ENCODE measurements at regions of chr5 and their contacts with region 1.

Region 1: DNA sequence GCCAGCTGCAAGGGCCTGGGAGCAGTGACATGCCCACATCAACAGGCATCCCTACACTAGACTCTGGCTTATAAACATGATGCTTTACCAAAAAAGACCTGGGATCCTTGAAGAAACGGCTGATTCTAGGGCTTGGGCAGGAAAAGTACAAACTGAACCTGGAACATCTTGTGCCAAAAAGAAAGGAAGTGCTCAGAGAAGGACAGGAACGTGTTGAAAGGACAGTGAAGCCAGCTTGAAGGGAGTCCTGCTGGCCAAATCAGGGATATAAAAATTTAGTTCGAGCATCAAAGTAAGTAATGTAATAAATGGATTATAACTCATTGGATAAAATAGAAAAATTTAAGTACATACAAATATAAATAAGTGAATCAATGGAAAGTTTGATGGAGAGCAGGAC is 58.1 kb downstream of the ALDH7A1 start:
- DNase-seq: no peak
- H3K4me3 ChIP-seq: no peak overlapping the region
- H3K27ac ChIP-seq: peak overlapping the region in 2 of 4 donors; percentile 3 to 26
- H3K4me1 ChIP-seq: peaks cover 4 to 34% (median 27%) of the 10 kb centered on the region in 4 donors
- H3K27me3 ChIP-seq: no peaks in the 10 kb centered on the region
- CTCF ChIP-seq: peak in 1 of 3 experiments; percentile 28
- EP300 ChIP-seq: peak; percentile 31
- POLR2A ChIP-seq: no peak

Region 2: DNA sequence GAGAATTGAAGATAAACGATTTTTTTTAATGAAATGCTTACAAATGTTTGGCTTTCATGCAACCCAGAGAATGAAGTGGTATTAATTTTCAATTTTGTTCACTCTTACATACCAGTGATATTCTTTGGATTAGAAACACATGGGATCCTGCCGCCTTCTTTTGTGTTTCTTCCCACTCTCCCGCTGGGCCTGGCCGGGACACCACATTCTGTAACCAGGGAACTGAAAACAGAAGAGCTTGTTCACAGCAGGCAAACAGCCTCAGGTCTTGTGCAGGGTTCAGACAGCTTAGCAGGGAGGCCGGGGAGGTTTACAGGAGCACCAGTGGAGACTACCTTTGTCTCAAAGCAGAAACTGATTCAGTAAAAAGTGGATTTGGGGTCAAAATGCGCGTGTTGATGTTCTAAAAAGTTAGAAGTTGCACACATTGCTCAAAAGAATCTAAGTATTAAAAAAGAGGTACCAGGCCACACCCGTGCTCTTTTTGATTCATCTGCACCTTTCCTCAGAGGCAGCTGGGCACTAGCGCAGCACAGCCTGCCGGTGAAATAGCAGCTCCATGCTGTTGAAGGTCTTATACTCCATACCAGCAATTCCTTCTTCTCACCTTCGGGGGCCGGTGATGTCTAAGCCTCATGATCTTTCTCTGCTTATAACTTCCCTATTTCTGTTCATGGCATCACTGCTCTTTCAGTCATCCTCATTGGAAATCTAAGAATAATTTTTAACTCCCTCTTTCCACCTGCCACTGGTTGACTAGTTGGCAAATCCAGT is 46.5 kb before region 1 on chr5:
- intact Hi-C with region 1: loop called (anchors 5 kb)
- DNase-seq: peak; percentile 88
- H3K4me3 ChIP-seq: no peak overlapping the region
- H3K27ac ChIP-seq: peak overlapping the region; percentile 40 to 65 (median 56)
- H3K4me1 ChIP-seq: peaks cover 7 to 34% (median 22%) of the 10 kb centered on the region in 4 donors
- H3K27me3 ChIP-seq: no peaks in the 10 kb centered on the region
- CTCF ChIP-seq: peak in 1 of 3 experiments; percentile 8
- EP300 ChIP-seq: no peak
- POLR2A ChIP-seq: no peak

Measured in esophagus muscularis mucosa (tissue), 4 donors.